Natural killer cell (primary cell): ENCODE measurements at regions of chr17 and their contacts with region 1.

Region 1: GRCh38 chr17:82781894-82782274 is 30.0 kb downstream of the TBCD start:
- DNase-seq: peak; percentile 88 to 91
- ATAC-seq: peak; percentile 93 to 99 (median 97)
- H3K4me3 ChIP-seq: no peak overlapping the region
- H3K4me3 Mint-ChIP-seq: peak overlapping the region; percentile 28
- H3K27ac ChIP-seq: no peak overlapping the region
- H3K27ac Mint-ChIP-seq: peak overlapping the region; percentile 88 to 90
- H3K4me1 ChIP-seq: peaks cover 22% of the 10 kb centered on the region
- H3K4me1 Mint-ChIP-seq: peaks cover 22 to 26% of the 10 kb centered on the region in 2 donors
- H3K27me3 ChIP-seq: no peaks in the 10 kb centered on the region
- H3K27me3 Mint-ChIP-seq: no peaks in the 10 kb centered on the region
- CTCF ChIP-seq: peak; percentile 94

Region 2: DNA sequence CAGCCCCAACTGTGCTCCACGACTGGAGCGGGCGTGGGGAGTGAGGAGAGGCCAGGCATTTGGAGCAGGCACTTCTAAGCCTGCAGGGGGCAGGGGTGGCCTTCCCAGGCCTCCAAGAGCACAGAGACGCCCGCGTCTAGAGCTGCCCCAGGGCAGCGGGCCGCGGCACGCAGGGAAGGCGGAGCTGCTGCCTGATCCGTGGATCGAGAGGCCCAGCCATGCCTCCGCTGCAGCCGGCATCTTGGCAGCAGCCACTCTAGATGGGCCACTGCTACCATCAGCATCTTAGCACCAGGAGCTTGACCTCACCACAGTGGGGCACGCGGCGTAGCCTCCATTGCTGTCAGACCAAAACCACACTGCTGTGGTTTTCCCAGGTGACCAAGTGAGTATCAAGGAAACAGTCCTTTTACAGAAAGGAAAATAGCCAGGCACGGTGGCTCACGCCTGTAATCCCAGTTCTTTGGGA is 113.2 kb before region 1 on chr17:
- intact Hi-C with region 1: loop called (anchors 5 kb)
- DNase-seq: peak; percentile 25 to 61
- ATAC-seq: peak; percentile 74 to 94 (median 91)
- H3K4me3 ChIP-seq: no peak overlapping the region
- H3K4me3 Mint-ChIP-seq: peak overlapping the region; percentile 37
- H3K27ac ChIP-seq: no peak overlapping the region
- H3K27ac Mint-ChIP-seq: peak overlapping the region in 1 of 2 donors; percentile 54
- H3K4me1 ChIP-seq: peaks cover 9% of the 10 kb centered on the region
- H3K4me1 Mint-ChIP-seq: peaks cover 6 to 21% of the 10 kb centered on the region in 2 donors
- H3K27me3 ChIP-seq: no peaks in the 10 kb centered on the region
- H3K27me3 Mint-ChIP-seq: no peaks in the 10 kb centered on the region
- CTCF ChIP-seq: peak; percentile 25

Region 3: GRCh38 chr17:82863941-82864774 is 82.3 kb after region 1 on chr17:
- intact Hi-C with region 1: loop called (anchors 5 kb)
- DNase-seq: peak; percentile 77 to 95
- ATAC-seq: peak; percentile 80 to 89 (median 88)
- H3K4me3 ChIP-seq: no peak overlapping the region
- H3K4me3 Mint-ChIP-seq: peak overlapping the region; percentile 85
- H3K27ac ChIP-seq: peak overlapping the region; percentile 75
- H3K27ac Mint-ChIP-seq: peak overlapping the region; percentile 96 to 98
- H3K4me1 ChIP-seq: peaks cover 78% of the 10 kb centered on the region
- H3K4me1 Mint-ChIP-seq: peaks cover 59 to 63% of the 10 kb centered on the region in 2 donors
- H3K27me3 ChIP-seq: no peaks in the 10 kb centered on the region
- H3K27me3 Mint-ChIP-seq: no peaks in the 10 kb centered on the region
- CTCF ChIP-seq: no peak

Region 4: DNA sequence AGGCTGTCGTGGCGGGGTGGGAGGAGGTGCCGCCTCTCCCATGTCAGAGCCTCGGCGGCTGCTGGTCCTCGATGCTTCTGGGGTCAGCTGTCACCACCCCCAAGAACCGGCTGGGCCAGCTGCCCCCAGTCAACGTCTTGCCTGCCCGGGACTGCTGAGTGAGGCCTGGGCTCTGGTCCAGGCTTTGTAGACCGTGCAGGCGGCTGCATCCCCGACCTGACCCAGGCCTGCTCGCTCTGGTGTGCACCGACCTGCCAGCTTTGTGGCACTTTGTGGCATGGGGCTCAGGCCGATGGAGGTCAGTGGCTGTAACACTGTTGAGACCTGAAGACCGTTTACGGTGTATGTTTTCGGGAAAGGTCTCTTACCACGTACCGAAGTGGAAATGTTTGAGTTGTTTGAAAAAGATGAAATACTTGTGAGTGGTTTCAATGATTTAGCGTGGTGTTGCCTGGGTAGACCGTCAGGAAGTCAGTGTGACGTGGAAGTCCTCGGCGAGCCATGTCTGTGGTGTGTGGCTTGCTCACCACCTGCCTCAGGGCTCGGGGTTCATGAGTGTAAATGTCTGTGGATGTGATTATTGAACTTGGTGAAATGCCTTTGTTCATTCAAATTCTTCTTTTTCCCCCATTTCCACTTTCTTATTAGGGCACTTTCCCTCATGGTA is 111.1 kb after region 1 on chr17:
- intact Hi-C with region 1: loop called (anchors 5 kb)
- DNase-seq: peak; percentile 76 to 91
- ATAC-seq: peak; percentile 92 to 99 (median 93)
- H3K4me3 ChIP-seq: no peak overlapping the region
- H3K4me3 Mint-ChIP-seq: peak overlapping the region; percentile 68
- H3K27ac ChIP-seq: peak overlapping the region; percentile 61
- H3K27ac Mint-ChIP-seq: peak overlapping the region; percentile 82 to 83
- H3K4me1 ChIP-seq: peaks cover 29% of the 10 kb centered on the region
- H3K4me1 Mint-ChIP-seq: peaks cover 31 to 36% of the 10 kb centered on the region in 2 donors
- H3K27me3 ChIP-seq: no peaks in the 10 kb centered on the region
- H3K27me3 Mint-ChIP-seq: peaks cover 0 to 7% of the 10 kb centered on the region in 2 donors
- CTCF ChIP-seq: no peak

Region 5: DNA sequence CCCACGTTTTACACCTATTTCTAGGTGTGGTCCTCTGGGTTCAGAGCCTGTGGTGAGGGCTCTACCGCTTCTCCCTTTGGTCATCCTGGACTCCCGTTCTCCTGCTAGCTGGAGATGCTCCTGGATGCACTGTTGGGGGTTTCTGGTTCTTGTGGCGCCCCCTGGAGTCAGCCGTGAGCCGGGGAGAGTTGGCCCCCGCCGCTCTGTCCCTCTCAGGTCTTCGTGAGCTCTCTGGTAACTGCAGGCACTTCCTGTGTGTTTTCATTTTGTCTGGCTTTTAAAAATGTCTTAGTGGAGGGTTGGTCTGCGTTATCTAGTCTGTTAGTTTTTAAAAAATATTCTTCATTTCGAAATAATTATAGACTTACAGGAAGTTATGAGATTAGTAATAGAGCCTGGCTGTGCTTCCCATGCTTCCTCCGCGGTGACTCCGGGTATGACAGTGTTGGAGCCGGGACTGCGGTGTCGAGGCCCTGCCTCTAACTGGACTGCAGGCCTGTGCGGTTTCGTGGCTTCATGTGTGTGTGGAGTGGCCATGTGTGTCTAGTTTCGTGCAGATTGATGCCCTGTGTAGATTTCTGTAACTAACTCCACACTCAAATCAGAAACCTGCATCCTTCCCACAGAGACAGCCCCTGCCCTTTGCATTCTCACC is 135.9 kb after region 1 on chr17:
- intact Hi-C with region 1: loop called (anchors 1 kb)
- DNase-seq: peak in 1 of 2 donors; percentile 59
- ATAC-seq: peak; percentile 21 to 68 (median 49)
- H3K4me3 ChIP-seq: no peak overlapping the region
- H3K4me3 Mint-ChIP-seq: no peak overlapping the region
- H3K27ac ChIP-seq: no peak overlapping the region
- H3K27ac Mint-ChIP-seq: no peak overlapping the region
- H3K4me1 ChIP-seq: peaks cover 4% of the 10 kb centered on the region
- H3K4me1 Mint-ChIP-seq: peaks cover under 1 to 9% of the 10 kb centered on the region in 2 donors
- H3K27me3 ChIP-seq: no peaks in the 10 kb centered on the region
- H3K27me3 Mint-ChIP-seq: no peaks in the 10 kb centered on the region
- CTCF ChIP-seq: peak; percentile 24

Region 6: DNA sequence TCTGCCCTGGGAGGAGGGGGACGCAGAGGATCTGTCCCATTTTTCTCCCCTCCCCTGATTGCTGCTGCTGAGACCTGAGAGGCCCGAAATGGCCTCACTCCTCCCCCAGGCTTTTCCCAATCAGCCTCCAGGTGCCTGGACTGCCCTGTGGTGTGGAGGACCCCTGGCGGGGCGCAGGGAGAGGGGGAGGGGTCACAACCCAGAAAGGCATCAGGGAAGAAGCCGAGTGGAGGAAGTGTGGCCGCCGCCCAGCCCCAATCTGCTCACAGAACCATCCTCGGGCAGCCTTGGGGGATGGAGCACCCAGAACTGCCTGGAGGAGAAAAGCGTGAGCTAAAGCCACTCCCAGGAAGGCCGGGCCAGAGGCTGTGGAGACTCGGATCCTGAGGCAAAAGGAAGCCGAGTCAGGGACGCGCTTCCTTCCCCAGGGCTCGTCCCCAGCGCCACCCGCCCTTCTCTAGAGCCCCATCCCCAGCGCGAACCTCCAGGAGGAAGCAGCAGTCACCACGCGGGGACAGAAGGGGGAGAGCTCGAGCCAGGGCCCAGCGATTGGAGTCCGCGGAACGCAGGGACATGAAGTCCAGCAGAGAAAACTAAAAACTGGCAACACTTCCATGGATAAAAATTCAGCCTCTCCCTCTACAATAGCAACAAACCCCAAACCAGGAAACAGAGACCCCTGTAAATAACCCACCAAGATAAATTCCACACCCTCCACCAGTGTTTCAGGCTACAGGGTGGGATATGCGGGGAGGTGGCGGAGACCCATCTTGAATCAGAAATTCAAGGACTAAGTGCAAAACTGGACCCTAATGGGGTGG is 181.2 kb after region 1 on chr17:
- intact Hi-C with region 1: loop called (anchors 1 kb)
- DNase-seq: peak; percentile 40 to 63
- ATAC-seq: peak; percentile 65 to 95 (median 92)
- H3K4me3 ChIP-seq: no peak overlapping the region
- H3K4me3 Mint-ChIP-seq: no peak overlapping the region
- H3K27ac ChIP-seq: no peak overlapping the region
- H3K27ac Mint-ChIP-seq: peak overlapping the region in 1 of 2 donors; percentile 16
- H3K4me1 ChIP-seq: peaks cover 9% of the 10 kb centered on the region
- H3K4me1 Mint-ChIP-seq: peaks cover 8 to 13% of the 10 kb centered on the region in 2 donors
- H3K27me3 ChIP-seq: no peaks in the 10 kb centered on the region
- H3K27me3 Mint-ChIP-seq: no peaks in the 10 kb centered on the region
- CTCF ChIP-seq: peak; percentile 63